ENCODE measurements at regions of chr12 and their contacts with region 1.

Region 1: GRCh38 chr12:86186449-86186848 is 69.7 kb downstream of the MGAT4C start:
- DNase-seq: peak; percentile 14
- ATAC-seq: no peak
- H3K4me3 ChIP-seq: no peak overlapping the region
- H3K27ac ChIP-seq: no peak overlapping the region
- H3K4me1 ChIP-seq: no peaks in the 10 kb centered on the region
- H3K27me3 ChIP-seq: no peaks in the 10 kb centered on the region
- CTCF ChIP-seq: peak; percentile 29
- POLR2A ChIP-seq: no peak
- RAD21 ChIP-seq: 0 out of 2 replicates have a peak, but pooled peaks have one; percentile 4

Region 2: GRCh38 chr12:86170051-86170450 is 16.4 kb before region 1 on chr12:
- CTCF ChIA-PET with region 1: no interaction called
- POLR2A ChIA-PET with region 1: interaction called, 13 read pairs
- dilution Hi-C with region 1: no loop called
- in situ Hi-C with region 1: no loop called
- intact Hi-C with region 1: no loop called
- DNase-seq: no peak
- ATAC-seq: no peak
- H3K4me3 ChIP-seq: no peak overlapping the region
- H3K27ac ChIP-seq: no peak overlapping the region
- H3K4me1 ChIP-seq: no peaks in the 10 kb centered on the region
- H3K27me3 ChIP-seq: no peaks in the 10 kb centered on the region
- CTCF ChIP-seq: no peak
- POLR2A ChIP-seq: no peak
- RAD21 ChIP-seq: no peak

Region 3: DNA sequence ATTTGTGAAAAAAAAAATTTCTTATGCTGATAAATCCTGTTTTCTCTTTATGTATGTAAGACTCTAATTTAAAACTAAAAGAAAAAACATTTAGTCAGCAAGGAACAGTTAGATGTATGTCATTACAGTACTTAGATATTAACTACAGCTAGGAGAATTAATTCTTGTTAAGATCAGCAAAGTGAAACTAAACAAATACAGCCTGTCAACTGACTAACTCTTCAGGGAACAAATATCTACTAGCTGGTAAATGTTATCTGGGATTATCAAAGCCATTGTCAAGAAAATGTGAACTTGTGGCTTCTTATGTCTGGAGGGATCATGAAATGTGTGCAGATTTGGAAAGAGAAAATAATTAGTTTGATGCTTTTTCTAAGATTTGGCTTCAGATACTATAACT is 42.2 kb after region 1 on chr12:
- CTCF ChIA-PET with region 1: no interaction called
- POLR2A ChIA-PET with region 1: no interaction called
- dilution Hi-C with region 1: no loop called
- in situ Hi-C with region 1: no loop called
- intact Hi-C with region 1: no loop called
- DNase-seq: no peak
- ATAC-seq: no peak
- H3K4me3 ChIP-seq: no peak overlapping the region
- H3K27ac ChIP-seq: no peak overlapping the region
- H3K4me1 ChIP-seq: no peaks in the 10 kb centered on the region
- H3K27me3 ChIP-seq: no peaks in the 10 kb centered on the region
- CTCF ChIP-seq: no peak
- POLR2A ChIP-seq: no peak
- RAD21 ChIP-seq: no peak

Region 4: GRCh38 chr12:86264451-86265342 is 78.2 kb after region 1 on chr12:
- CTCF ChIA-PET with region 1: no interaction called
- POLR2A ChIA-PET with region 1: no interaction called
- dilution Hi-C with region 1: no loop called
- in situ Hi-C with region 1: no loop called
- intact Hi-C with region 1: no loop called
- DNase-seq: no peak
- ATAC-seq: no peak
- H3K4me3 ChIP-seq: no peak overlapping the region
- H3K27ac ChIP-seq: no peak overlapping the region
- H3K4me1 ChIP-seq: no peaks in the 10 kb centered on the region
- H3K27me3 ChIP-seq: no peaks in the 10 kb centered on the region; the same call in 1 of the 2 replicates
- CTCF ChIP-seq: no peak
- POLR2A ChIP-seq: no peak
- RAD21 ChIP-seq: no peak

Region 5: GRCh38 chr12:86333955-86334522 is 147.6 kb after region 1 on chr12:
- CTCF ChIA-PET with region 1: no interaction called
- POLR2A ChIA-PET with region 1: no interaction called
- dilution Hi-C with region 1: no loop called
- in situ Hi-C with region 1: no loop called
- intact Hi-C with region 1: no loop called
- DNase-seq: no peak
- ATAC-seq: no peak
- H3K4me3 ChIP-seq: no peak overlapping the region
- H3K27ac ChIP-seq: no peak overlapping the region
- H3K4me1 ChIP-seq: no peaks in the 10 kb centered on the region
- H3K27me3 ChIP-seq: no peaks in the 10 kb centered on the region
- CTCF ChIP-seq: no peak
- POLR2A ChIP-seq: no peak
- RAD21 ChIP-seq: no peak

Measured in IMR-90 (cell line).